ENCODE measurements at regions of chr19 and their contacts with region 1.

Region 1: GRCh38 chr19:13033819-13034611 is 38.7 kb downstream of the NFIX start:
- DNase-seq: peak; percentile 89

Region 2: GRCh38 chr19:13060964-13061927 is 27.2 kb after region 1 on chr19:
- intact Hi-C with region 1: loop called in 1 of 2 experiments (anchors 2 kb)
- DNase-seq: peak; percentile 96

Region 3: DNA sequence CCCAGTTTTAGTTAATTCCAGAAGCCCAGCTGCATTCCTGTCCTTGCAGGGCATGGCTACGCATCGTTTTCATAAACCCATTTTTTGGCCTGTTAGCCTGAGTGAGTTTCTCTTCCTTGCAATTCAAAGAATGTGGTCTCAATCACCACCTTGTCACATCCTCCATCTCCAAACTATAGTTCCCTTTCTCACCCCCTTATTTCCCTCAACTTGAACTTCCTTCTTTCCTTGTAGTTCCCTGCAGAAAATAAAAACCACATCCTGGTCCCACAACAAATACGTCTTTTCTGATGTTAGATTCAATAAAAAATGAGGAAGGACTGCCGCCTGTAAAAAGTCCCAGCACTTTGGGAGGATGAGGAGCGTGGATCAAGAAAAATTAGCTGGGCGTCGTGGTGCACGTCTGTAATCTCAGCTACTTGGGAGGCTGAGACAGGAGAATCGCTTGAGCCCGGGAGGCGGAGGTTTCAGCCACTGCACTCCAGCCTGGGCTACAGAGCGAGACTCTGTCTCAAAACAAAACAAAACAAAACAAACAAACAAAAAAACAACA is 1627.4 kb after region 1 on chr19:
- intact Hi-C with region 1: no loop called
- DNase-seq: no peak

Measured in posterior vena cava (tissue), 2 donors.